GM10248 (cell line): ENCODE measurements at regions of chr1 and their contacts with region 1.

Region 1: GRCh38 chr1:155167166-155168104 is 5.7 kb downstream of the KRTCAP2 start:
- DNase-seq: peak; percentile 84
- CTCF ChIP-seq: peak; percentile 92

Region 2: GRCh38 chr1:155105604-155106022 is 61.8 kb before region 1 on chr1:
- CTCF ChIA-PET with region 1: interaction called, 14 read pairs
- POLR2A ChIA-PET with region 1: no interaction called
- DNase-seq: no peak
- CTCF ChIP-seq: no peak

Region 3: GRCh38 chr1:155128755-155129473 is 38.5 kb before region 1 on chr1:
- CTCF ChIA-PET with region 1: interaction called, 27 read pairs
- POLR2A ChIA-PET with region 1: no interaction called
- DNase-seq: no peak
- CTCF ChIP-seq: no peak

Region 4: GRCh38 chr1:155135415-155136028 is 31.9 kb before region 1 on chr1 and contains the start of gene SLC50A1:
- CTCF ChIA-PET with region 1: interaction called, 27 read pairs
- POLR2A ChIA-PET with region 1: no interaction called
- DNase-seq: peak; percentile 96
- CTCF ChIP-seq: no peak

Region 5: GRCh38 chr1:155145491-155145890 is 21.9 kb before region 1 on chr1:
- CTCF ChIA-PET with region 1: interaction called, 15 read pairs
- POLR2A ChIA-PET with region 1: no interaction called
- DNase-seq: no peak
- CTCF ChIP-seq: no peak

Region 6: DNA sequence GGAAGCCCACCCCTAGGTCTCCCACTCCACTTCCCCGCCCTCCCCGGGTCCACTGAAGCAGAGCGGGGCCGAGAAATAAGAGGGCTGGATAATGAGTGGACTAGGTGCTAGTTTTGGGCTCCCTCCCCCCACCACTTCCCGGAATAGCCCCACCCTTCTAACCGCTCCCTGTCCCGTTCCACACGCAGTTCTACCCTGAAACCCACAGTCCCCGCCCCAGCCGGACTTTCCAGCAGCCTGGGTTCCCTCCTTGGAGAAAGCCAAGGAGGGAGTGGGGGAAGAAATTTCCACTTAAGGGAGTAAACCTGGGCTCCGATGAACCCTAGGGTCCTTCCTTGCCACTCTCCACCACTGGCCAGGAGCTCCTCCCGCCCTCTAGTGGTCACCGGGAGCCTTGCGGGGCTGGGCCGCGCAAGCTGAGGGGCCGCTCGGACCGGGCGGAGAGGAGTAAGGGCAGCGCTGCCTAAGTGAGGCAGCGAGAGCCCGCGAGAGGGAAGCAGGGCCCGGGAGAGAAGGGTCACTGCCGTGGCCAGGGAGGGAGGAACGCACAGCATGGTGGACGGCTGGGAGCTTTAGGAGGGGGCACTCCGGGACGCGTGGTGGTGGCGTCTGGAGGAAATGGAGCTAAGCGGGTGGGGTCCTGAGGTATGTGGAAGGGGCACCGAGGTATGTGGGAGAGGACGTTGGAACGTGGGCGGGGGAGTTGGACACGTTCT is 26.0 kb after region 1 on chr1:
- CTCF ChIA-PET with region 1: interaction called, 167 read pairs
- POLR2A ChIA-PET with region 1: no interaction called
- DNase-seq: peak; percentile 89
- CTCF ChIP-seq: peak; percentile 99